Activated B cell treated with CpG ODN at 0.5 μM for 24 hours (primary cell): ENCODE measurements at regions of chr6 and their contacts with region 1.

Region 1: DNA sequence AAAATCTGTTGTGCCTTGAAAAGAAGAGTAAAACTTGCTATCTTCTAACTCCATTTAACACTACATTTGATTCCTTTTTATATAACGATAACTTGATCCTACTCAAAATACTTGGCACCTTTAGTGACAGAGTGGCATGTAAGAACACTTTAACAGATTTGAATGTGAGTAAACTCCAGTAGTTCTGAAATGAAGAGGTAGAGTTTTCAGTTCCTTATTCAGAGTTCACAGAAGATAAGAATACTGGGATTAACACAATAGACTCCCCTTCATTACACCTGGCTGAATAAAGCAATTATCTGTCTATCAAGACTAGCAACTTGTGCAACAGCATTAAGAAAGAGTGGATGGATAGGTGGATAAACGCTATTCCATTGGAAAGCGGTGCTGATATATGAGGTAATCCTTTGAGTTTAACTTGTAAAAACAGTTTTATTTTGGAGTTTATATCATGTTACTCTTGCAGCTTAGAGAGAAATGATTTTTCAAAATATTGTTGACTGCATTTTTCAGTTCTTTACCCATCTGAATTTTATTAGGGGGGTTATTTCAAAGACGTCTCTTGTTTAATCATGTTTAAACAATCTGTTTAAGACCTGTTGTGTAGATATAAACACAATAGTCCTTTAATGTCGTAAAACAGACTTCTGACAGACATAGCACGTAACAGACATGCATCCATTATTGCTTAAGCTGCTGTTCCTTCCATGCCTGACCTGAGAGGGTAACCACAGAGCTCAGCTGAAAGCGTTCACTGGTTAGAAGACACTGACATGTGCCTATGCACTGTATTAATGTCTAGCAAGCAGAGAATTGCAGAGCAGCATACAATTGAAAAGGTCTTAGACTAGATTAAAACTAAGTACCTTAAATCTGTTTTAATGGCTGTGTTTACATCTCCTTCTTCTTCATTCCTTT is 102.4 kb upstream of the SUPT3H start:
- DNase-seq: no peak
- ATAC-seq: peak; percentile 65
- H3K4me3 Mint-ChIP-seq: no peak overlapping the region
- H3K27ac Mint-ChIP-seq: no peak overlapping the region
- H3K4me1 Mint-ChIP-seq: peaks cover 18% of the 10 kb centered on the region
- H3K27me3 Mint-ChIP-seq: no peaks in the 10 kb centered on the region
- CTCF ChIP-seq: no peak

Region 2: GRCh38 chr6:45156075-45156474 is 324.0 kb before region 1 on chr6:
- CTCF ChIA-PET with region 1: no interaction called
- POLR2A ChIA-PET with region 1: interaction called, 10 read pairs
- intact Hi-C with region 1: no loop called
- DNase-seq: no peak
- ATAC-seq: no peak
- H3K4me3 Mint-ChIP-seq: no peak overlapping the region
- H3K27ac Mint-ChIP-seq: no peak overlapping the region
- H3K4me1 Mint-ChIP-seq: no peaks in the 10 kb centered on the region
- H3K27me3 Mint-ChIP-seq: no peaks in the 10 kb centered on the region
- CTCF ChIP-seq: no peak

Region 3: GRCh38 chr6:45377554-45378333 is 102.3 kb before region 1 on chr6 and contains the start of gene SUPT3H:
- CTCF ChIA-PET with region 1: no interaction called
- POLR2A ChIA-PET with region 1: no interaction called
- intact Hi-C with region 1: loop called (anchors 2 kb)
- DNase-seq: peak; percentile 91
- ATAC-seq: peak; percentile 79
- H3K4me3 Mint-ChIP-seq: peak within 1 kb of the TSS; percentile 99
- H3K27ac Mint-ChIP-seq: peak within 1 kb of the TSS; percentile 99
- H3K4me1 Mint-ChIP-seq: peaks cover 26% of the 10 kb centered on the region
- H3K27me3 Mint-ChIP-seq: no peaks in the 10 kb centered on the region
- CTCF ChIP-seq: no peak
- total RNA-seq, gene SUPT3H: 9.9 and 10.4 TPM in 2 replicates

Region 4: DNA sequence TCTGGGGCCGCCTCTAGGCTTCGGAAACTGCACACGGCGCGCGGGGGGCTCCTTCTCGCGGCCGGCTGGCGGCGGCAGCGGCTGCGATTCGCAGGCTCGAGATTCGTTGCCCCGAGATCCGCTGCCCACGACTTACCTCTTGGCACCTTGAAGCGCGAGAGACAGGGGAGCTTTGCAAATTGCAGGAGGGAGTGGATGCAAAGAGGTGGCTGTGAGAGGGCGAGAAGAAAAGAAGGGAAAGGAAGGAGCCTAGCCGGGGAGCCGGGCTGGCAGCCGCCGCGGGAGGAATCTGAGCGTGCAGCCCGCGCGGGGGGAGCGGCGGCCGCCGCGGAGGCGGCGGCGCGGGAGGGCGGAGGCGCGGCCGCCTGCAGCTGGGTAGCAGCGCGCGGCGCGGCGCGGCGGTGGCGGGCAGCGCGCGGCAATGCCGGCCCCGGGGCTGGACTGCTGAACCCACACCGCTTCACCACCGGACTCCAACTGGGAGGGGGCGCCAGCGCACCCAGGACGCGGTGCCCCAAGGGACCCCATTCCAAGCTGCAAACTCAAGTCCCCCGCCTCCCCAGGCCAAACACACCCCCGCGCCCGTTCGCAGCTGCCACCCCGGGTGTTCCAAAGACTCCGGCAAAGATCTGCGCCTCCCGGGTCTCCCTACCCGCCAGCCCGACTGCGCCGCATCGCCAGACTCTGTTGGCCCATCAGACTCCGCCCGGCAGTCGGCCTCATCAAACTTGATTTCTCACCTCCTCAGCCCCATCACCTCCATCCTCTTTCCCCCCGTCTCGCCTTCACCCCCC is 58.2 kb before region 1 on chr6:
- CTCF ChIA-PET with region 1: no interaction called
- POLR2A ChIA-PET with region 1: no interaction called
- intact Hi-C with region 1: loop called (anchors 2 kb)
- DNase-seq: peak; percentile 50
- ATAC-seq: peak; percentile 40
- H3K4me3 Mint-ChIP-seq: peak overlapping the region; percentile 90
- H3K27ac Mint-ChIP-seq: peak overlapping the region; percentile 76
- H3K4me1 Mint-ChIP-seq: peaks cover 54% of the 10 kb centered on the region
- H3K27me3 Mint-ChIP-seq: peaks cover 39% of the 10 kb centered on the region
- CTCF ChIP-seq: no peak

Region 5: GRCh38 chr6:45548657-45549515 is 68.8 kb after region 1 on chr6:
- CTCF ChIA-PET with region 1: no interaction called
- POLR2A ChIA-PET with region 1: no interaction called
- intact Hi-C with region 1: loop called (anchors 10 kb)
- DNase-seq: peak; percentile 20
- ATAC-seq: peak; percentile 97
- H3K4me3 Mint-ChIP-seq: peak overlapping the region; percentile 9
- H3K27ac Mint-ChIP-seq: no peak overlapping the region
- H3K4me1 Mint-ChIP-seq: peaks cover 15% of the 10 kb centered on the region
- H3K27me3 Mint-ChIP-seq: no peaks in the 10 kb centered on the region
- CTCF ChIP-seq: no peak

Region 6: DNA sequence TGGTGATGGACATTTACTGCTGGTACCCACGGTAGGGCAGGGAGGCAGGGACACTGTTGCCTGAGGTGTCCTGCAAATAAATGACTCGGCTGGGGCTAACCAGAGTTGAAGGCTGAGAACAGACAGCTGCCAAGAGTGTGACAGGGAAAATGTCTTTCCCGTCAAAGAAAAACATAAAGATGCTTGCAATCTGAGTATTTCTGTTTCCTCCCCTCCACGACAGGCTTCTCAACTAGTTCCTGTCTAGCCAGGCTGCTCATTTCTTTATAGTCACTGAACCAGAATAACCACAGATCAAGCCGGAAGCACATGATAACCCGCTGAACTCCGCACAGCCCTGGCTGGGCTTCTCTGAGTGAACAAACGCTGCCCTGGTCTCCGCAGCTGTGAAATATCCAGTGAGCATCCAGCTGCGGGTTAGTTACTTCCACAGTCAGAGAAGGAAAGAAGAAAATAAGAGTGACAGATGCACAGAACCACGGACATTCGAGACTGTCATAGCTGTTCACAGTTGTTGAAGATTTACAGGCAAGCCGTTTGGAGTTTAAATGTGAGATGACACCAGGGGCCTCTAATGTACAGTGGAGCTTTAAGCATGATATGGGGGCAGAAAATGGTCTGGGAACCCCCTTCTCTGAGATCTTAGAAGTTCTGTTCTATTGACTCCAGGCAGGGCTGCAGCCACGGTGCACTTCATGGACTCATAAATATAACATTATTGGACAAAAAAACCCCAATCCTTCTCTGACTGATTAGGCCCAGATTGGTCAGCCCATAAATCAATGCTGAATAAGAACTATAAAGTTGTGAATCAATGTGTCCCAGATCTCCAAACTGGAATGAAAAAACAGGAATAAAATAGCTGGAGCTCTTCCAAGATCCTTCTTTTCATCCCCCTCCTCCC is 197.5 kb after region 1 on chr6:
- CTCF ChIA-PET with region 1: no interaction called
- POLR2A ChIA-PET with region 1: no interaction called
- intact Hi-C with region 1: loop called (anchors 5 kb)
- DNase-seq: peak; percentile 54
- ATAC-seq: peak; percentile 76
- H3K4me3 Mint-ChIP-seq: peak overlapping the region; percentile 73
- H3K27ac Mint-ChIP-seq: peak overlapping the region; percentile 85
- H3K4me1 Mint-ChIP-seq: peaks cover 53% of the 10 kb centered on the region
- H3K27me3 Mint-ChIP-seq: no peaks in the 10 kb centered on the region
- CTCF ChIP-seq: no peak